Activated CD8-positive, alpha-beta memory T cell treated with anti-CD3 and anti-CD28 coated beads, Interleukin-2, amount 10 ng/mL, durations not matched to agents 7 days and 5 days (primary cell): ENCODE measurements at regions of chr10 and their contacts with region 1.

Region 1: DNA sequence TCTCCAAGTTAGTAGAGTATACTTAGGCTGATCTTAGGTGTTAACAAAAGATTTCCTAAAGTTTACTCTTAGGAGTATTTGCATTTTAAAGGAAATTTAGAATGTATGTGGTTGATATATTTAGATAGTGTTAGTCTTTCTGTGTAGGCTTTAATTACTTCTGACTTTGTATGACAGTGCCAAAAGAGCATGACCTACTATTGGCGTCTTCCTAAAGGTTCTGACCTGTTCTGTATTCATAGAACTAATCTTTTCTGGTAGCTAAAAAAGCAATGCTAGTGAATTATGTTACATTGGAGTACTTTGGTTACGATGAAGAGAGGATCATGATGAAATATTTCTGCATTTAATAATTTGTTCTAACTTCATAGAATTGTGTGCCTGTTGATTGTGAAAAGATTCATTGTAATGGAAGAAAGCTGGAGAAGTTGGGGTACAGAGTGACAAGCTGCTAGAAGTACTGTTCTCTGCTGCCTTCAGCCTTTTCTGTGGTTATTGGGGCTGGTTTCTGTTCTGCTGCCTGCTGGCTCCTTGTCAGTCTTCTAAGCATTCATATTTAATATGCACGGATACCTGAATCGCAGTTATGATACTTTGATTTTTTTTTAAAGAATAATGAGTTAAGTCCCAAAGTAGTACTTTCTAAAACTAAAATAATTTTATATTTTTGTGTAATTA is 13.2 kb downstream of the WAC start:
- DNase-seq: no peak
- ATAC-seq: peak; percentile 72
- H3K4me3 Mint-ChIP-seq: no peak overlapping the region
- H3K27ac Mint-ChIP-seq: peak overlapping the region; percentile 75
- H3K4me1 Mint-ChIP-seq: peaks cover 70% of the 10 kb centered on the region
- H3K27me3 Mint-ChIP-seq: no peaks in the 10 kb centered on the region

Region 2: GRCh38 chr10:28533571-28534304 is 12.4 kb before region 1 on chr10:
- CTCF ChIA-PET with region 1: interaction called, 11 read pairs
- DNase-seq: peak; percentile 79
- ATAC-seq: peak; percentile 27
- H3K4me3 Mint-ChIP-seq: peak overlapping the region; percentile 95
- H3K27ac Mint-ChIP-seq: peak overlapping the region; percentile 93
- H3K4me1 Mint-ChIP-seq: peaks cover 56% of the 10 kb centered on the region
- H3K27me3 Mint-ChIP-seq: no peaks in the 10 kb centered on the region